Aorta (tissue), 5 donors: ENCODE measurements at regions of chr3 and their contacts with region 1.

Region 1: GRCh38 chr3:123876858-123877257 is 7.3 kb downstream of the MYLK start:
- DNase-seq: no peak
- ATAC-seq: no peak
- H3K4me3 ChIP-seq: no peak overlapping the region
- H3K27ac ChIP-seq: peak overlapping the region; percentile 23 to 46
- H3K4me1 ChIP-seq: peaks cover 4% of the 10 kb centered on the region in 2 donors
- H3K27me3 ChIP-seq: no peaks in the 10 kb centered on the region

Region 2: GRCh38 chr3:123807820-123808219 is 69.0 kb before region 1 on chr3:
- intact Hi-C with region 1: no loop called
- DNase-seq: no peak
- ATAC-seq: no peak
- H3K4me3 ChIP-seq: no peak overlapping the region
- H3K27ac ChIP-seq: peak overlapping the region in 1 of 2 donors; percentile 12
- H3K4me1 ChIP-seq: no peaks in the 10 kb centered on the region
- H3K27me3 ChIP-seq: no peaks in the 10 kb centered on the region

Region 3: GRCh38 chr3:123936400-123936799 is 59.5 kb after region 1 on chr3:
- intact Hi-C with region 1: loop called in 1 of 2 experiments (anchors 2 kb)
- DNase-seq: no peak
- ATAC-seq: no peak
- H3K4me3 ChIP-seq: no peak overlapping the region
- H3K27ac ChIP-seq: no peak overlapping the region
- H3K4me1 ChIP-seq: peaks cover 2 to 4% of the 10 kb centered on the region in 2 donors
- H3K27me3 ChIP-seq: no peaks in the 10 kb centered on the region

Region 4: DNA sequence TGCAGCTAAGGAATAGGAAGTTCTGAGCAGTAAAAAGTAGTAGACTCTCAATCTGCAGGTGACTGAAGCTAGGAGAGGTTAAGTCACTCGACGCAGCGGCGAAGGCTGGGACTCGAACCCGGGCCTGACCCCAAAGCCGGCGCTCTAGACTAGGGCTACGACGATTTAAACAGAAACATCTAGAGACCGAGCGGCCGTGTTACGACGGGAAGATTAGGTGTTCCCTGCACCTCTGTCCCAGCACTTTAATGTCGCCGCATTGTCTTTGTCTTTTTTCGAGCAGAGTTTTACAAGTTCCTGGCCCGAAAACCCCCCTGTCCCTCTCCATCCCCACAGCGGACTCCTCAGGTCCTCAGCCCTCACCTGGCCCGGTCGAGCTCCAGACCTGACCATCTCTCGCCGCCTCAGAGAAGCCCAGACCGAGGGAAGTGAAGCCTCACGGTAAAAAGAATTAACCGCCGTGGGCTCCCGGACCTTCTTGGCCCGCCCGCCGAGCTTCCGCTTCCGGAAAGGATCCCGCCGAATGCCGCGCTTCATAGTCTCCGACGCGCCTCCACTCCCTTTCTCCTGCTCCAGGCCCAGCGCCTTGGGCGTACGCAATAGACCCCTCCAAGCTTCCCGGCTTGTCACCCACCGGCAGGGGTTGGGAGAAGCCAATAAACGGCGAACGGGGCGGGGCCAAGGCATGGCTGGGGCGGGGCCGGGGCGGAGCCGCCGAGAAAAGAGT is 84.1 kb after region 1 on chr3 and contains the start of gene CCDC14:
- intact Hi-C with region 1: no loop called
- DNase-seq: peak; percentile 96 to 98
- ATAC-seq: peak; percentile 98
- H3K4me3 ChIP-seq: peak within 1 kb of the TSS; percentile 75 to 81
- H3K27ac ChIP-seq: peak within 1 kb of the TSS in 1 of 2 donors; percentile 85
- H3K4me1 ChIP-seq: no peaks in the 10 kb centered on the region
- H3K27me3 ChIP-seq: no peaks in the 10 kb centered on the region
- total RNA-seq, gene CCDC14: 40.5 to 55.5 TPM